Colonic mucosa (tissue), 4 donors: ENCODE measurements at regions of chr11 and their contacts with region 1.

Region 1: GRCh38 chr11:102341844-102342318 is 5.1 kb upstream of the BIRC2 start:
- DNase-seq: peak; percentile 84
- H3K4me3 ChIP-seq: no peak overlapping the region
- H3K27ac ChIP-seq: no peak overlapping the region
- H3K4me1 ChIP-seq: no peaks in the 10 kb centered on the region
- H3K27me3 ChIP-seq: no peaks in the 10 kb centered on the region
- CTCF ChIP-seq: peak; percentile 76

Region 2: DNA sequence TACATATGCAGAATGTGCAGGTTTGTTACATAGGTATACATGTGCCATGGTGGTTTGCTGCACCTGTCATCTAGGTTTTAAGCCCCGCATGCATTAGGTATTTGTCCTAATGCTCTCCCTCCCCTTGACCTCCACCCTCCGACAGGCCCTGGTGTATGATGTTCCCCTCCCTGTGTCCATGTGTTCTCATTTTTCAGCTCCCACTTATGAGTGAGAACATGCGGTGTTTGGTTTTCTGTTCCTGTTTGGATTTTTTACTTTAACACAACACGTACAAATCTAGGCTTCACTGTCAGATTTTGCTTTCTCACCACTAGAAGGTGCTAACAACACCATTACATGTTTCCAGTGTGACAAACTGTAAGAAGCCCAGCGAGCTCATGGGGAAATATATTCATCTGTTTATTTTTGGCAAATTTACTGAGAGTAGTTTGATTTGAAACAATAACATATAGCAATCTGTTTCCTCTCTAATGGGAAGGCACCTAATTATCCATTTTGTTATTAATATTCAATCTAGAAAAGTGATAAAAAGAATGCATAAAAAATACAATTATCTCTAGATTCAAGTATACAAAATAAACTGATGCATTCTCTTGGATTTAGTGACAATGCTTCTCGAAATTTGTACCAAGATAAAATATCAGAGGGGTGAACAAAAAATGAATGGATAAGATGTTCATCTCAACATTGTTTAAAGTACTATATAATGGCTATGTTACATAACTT is 47.8 kb before region 1 on chr11:
- intact Hi-C with region 1: loop called (anchors 5 kb)
- DNase-seq: no peak
- H3K4me3 ChIP-seq: no peak overlapping the region
- H3K27ac ChIP-seq: no peak overlapping the region
- H3K4me1 ChIP-seq: peaks cover 5% of the 10 kb centered on the region
- H3K27me3 ChIP-seq: no peaks in the 10 kb centered on the region
- CTCF ChIP-seq: peak; percentile 58

Region 3: GRCh38 chr11:102614485-102614884 is 272.6 kb after region 1 on chr11:
- intact Hi-C with region 1: loop called (anchors 5 kb)
- DNase-seq: no peak
- H3K4me3 ChIP-seq: no peak overlapping the region
- H3K27ac ChIP-seq: no peak overlapping the region
- H3K4me1 ChIP-seq: no peaks in the 10 kb centered on the region
- H3K27me3 ChIP-seq: no peaks in the 10 kb centered on the region
- CTCF ChIP-seq: no peak